Pancreas (tissue), 10 donors: ENCODE measurements at regions of chr20 and their contacts with region 1.

Region 1: DNA sequence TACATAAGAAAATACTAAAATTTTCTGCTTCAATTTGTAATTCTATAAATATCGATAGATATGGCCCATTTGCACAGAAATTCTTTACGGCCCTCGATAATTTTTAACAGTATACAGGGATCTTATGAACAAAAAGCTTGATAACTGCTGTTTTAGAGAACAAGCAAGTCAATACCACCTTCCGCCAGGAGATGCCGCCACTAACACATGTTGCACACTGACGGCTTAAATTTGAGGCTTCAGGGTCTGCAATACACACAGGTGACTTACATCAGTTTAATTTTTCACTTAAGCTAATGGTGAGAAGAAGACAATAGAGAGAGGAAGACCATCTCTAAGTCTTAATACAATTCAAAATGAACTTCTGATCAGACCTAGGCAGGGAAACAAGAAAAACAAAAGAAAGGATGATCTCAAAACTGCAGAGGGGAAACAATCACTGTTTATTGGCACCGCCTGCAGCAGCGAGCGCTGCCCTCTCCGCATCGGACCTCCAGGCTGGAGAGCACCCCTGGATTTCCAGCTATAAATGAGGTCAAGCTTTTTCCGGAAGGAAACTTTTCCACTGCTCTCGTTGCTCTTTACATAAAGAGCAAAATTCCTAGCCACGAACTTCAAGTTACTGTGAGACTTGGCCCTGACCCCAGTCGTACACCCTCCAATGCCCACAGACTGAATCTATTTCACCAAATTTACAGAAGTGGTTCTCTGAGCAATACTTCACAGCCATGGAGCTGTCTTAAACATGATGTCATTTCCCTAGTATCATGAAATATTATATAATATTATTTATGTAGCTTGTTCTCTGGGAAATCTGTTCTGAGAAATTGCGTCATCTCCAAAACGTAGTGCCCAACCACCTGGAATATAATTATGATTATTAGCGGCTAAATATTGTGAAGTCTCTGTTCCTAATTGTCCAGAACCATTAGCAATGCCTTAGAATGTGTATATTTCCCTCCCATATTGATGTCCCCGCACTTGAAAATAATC is 54.1 kb downstream of the OTOR start:
- DNase-seq: peak; percentile 22 to 86 (median 62)
- ATAC-seq: peak in 3 of 4 donors; percentile 71 to 78 (median 76)
- H3K4me3 ChIP-seq: no peak overlapping the region
- H3K27ac ChIP-seq: no peak overlapping the region
- H3K4me1 ChIP-seq: no peaks in the 10 kb centered on the region
- H3K27me3 ChIP-seq: peaks cover 0 to 12% (median 0%) of the 10 kb centered on the region in 4 donors
- CTCF ChIP-seq: peak; percentile 57 to 84 (median 72)

Region 2: DNA sequence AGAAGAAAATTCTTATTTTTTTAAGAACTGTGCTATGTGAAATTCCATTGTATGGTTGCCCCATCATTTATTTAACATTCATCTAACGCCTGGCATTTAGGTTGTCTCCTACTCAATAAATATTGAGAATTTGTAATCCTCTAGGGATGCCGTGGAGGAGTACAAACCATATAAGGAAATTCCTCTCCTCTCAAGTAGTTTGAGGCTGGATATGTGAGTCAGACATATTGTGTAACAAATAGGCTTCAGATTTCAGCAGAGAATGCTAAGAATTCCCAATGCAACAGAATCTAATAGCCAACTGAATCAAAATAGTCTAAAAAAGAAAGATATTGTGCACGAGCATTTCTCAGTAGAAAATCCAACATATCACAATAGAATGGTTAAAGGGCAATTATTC is 120.6 kb after region 1 on chr20:
- intact Hi-C with region 1: no loop called
- DNase-seq: no peak
- ATAC-seq: peak in 1 of 4 donors; percentile 53
- H3K4me3 ChIP-seq: no peak overlapping the region
- H3K27ac ChIP-seq: no peak overlapping the region
- H3K4me1 ChIP-seq: no peaks in the 10 kb centered on the region
- H3K27me3 ChIP-seq: peaks cover 0 to 4% (median 0%) of the 10 kb centered on the region in 4 donors
- CTCF ChIP-seq: no peak

Region 3: GRCh38 chr20:17189976-17190695 is 387.9 kb after region 1 on chr20:
- intact Hi-C with region 1: no loop called
- DNase-seq: no peak
- ATAC-seq: no peak
- H3K4me3 ChIP-seq: no peak overlapping the region
- H3K27ac ChIP-seq: no peak overlapping the region
- H3K4me1 ChIP-seq: no peaks in the 10 kb centered on the region
- H3K27me3 ChIP-seq: no peaks in the 10 kb centered on the region
- CTCF ChIP-seq: no peak

Region 4: DNA sequence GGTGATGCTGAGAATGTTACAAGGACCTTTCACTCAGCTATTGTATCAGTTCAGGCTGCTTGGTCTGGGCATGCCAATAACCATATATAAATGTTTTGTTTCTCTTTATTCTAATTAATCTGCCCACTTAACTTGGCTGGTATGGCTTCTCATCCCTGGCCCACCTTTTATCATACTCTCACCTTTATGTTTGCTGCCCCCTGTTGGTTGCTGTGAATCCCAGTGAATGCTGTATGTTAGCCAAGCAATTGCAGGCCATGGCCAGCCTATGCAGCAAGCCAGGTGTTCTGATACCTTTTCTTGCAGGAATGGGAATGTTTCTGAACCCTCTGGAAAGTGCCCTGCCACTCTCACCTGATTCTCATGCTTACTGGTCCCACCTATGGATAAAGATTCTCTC is 479.3 kb after region 1 on chr20:
- intact Hi-C with region 1: loop called in 1 of 3 experiments (anchors 10 kb)
- DNase-seq: peak in 4 of 6 donors; percentile 15 to 36 (median 16)
- ATAC-seq: peak in 1 of 4 donors; percentile 43
- H3K4me3 ChIP-seq: no peak overlapping the region
- H3K27ac ChIP-seq: no peak overlapping the region
- H3K4me1 ChIP-seq: no peaks in the 10 kb centered on the region
- H3K27me3 ChIP-seq: no peaks in the 10 kb centered on the region
- CTCF ChIP-seq: peak; percentile 12 to 37 (median 18)

Region 5: GRCh38 chr20:17431621-17432364 is 629.6 kb after region 1 on chr20:
- intact Hi-C with region 1: loop called (anchors 2 to 10 kb)
- DNase-seq: peak in 4 of 6 donors; percentile 23 to 75 (median 46)
- ATAC-seq: peak in 3 of 4 donors; percentile 55 to 70 (median 63)
- H3K4me3 ChIP-seq: no peak overlapping the region
- H3K27ac ChIP-seq: no peak overlapping the region
- H3K4me1 ChIP-seq: no peaks in the 10 kb centered on the region
- H3K27me3 ChIP-seq: no peaks in the 10 kb centered on the region
- CTCF ChIP-seq: peak; percentile 71 to 83 (median 82)

Region 6: GRCh38 chr20:17438436-17439039 is 636.3 kb after region 1 on chr20:
- intact Hi-C with region 1: loop called (anchors 2 to 10 kb)
- DNase-seq: no peak
- ATAC-seq: no peak
- H3K4me3 ChIP-seq: no peak overlapping the region
- H3K27ac ChIP-seq: no peak overlapping the region
- H3K4me1 ChIP-seq: no peaks in the 10 kb centered on the region
- H3K27me3 ChIP-seq: peaks cover 0 to 5% (median 2%) of the 10 kb centered on the region in 4 donors
- CTCF ChIP-seq: no peak